ENCODE measurements at regions of chr1 and their contacts with region 1.

Region 1: GRCh38 chr1:203888807-203889251 is 27.4 kb downstream of the SNRPE start:
- DNase-seq: peak; percentile 14 to 87
- H3K4me3 ChIP-seq: no peak overlapping the region; the same call in 1 of the 2 replicates
- H3K27ac ChIP-seq: peak overlapping the region; percentile 89
- H3K4me1 ChIP-seq: peaks cover 34% of the 10 kb centered on the region
- H3K27me3 ChIP-seq: no peaks in the 10 kb centered on the region
- CTCF ChIP-seq: no peak

Region 2: DNA sequence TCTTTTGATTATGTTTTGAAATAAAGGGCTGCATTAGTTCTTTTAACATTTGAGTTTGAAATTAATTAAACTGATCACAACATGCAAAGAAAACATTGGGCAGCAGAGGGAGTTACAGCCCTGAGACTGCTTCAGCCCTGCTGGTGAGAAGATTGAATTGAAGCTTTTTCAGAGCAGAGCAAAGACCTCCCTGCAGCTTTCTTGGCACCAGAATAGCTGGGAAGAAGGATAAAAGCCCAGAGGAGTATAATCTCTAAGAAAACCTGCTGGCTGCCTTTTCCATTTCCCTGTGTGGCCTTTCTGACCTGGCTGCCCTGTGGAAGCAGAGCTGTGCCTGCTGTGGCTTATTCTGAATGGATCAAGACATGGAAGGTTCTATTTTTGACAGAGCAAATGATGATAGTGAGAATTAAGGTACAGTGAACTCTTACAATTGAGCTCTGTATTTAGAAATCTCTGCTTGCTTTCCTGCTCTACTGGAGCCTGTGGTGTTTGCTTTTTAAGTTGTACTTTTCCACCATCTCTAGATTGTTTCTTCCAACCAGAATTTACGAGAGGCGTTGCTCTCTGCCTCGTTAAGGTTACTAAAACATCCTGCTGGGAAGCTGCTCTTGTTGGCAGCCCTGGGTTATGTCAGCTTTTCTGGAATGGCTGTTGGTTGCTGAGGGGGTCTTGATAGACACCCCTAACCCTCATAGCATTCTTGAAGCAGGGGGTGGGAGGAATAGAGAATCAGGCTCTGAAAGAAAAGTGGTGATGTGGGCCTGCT is 17.5 kb before region 1 on chr1:
- CTCF ChIA-PET with region 1: no interaction called
- POLR2A ChIA-PET with region 1: no interaction called
- intact Hi-C with region 1: no loop called
- DNase-seq: peak; percentile 41 to 60
- H3K4me3 ChIP-seq: no peak overlapping the region
- H3K27ac ChIP-seq: peak overlapping the region; percentile 63
- H3K4me1 ChIP-seq: peaks cover 33% of the 10 kb centered on the region
- H3K27me3 ChIP-seq: no peaks in the 10 kb centered on the region
- CTCF ChIP-seq: peak; percentile 92

Region 3: DNA sequence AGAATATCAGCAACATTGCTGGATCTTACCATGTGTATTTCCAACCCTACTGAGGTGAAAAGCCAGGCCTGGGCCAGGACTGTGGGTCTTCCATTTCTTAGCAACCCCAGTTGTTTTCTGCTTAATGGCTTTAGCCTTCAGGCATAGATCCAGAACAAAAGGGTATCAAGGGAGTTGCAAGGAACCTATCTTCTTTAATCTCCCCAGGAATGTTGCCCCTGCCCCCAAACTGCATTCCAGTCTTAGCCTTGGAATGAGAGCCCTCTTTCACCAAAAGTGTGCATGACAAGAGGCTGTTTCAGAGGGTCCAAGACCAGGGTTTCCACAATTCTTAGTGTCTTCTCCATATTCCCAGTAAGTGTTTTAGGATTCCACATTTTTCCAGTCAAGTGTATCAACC is 96.2 kb after region 1 on chr1:
- CTCF ChIA-PET with region 1: interaction called, 5 read pairs
- POLR2A ChIA-PET with region 1: no interaction called
- intact Hi-C with region 1: loop called (anchors 5 kb)
- DNase-seq: peak in 1 of 2 experiments; percentile 51
- H3K4me3 ChIP-seq: no peak overlapping the region
- H3K27ac ChIP-seq: no peak overlapping the region
- H3K4me1 ChIP-seq: peaks cover 6% of the 10 kb centered on the region; the same call in 1 of the 2 replicates
- H3K27me3 ChIP-seq: no peaks in the 10 kb centered on the region
- CTCF ChIP-seq: no peak

Region 4: GRCh38 chr1:204072931-204073836 is 184.4 kb after region 1 on chr1 and contains the start of gene SOX13:
- CTCF ChIA-PET with region 1: interaction called, 20 read pairs
- POLR2A ChIA-PET with region 1: no interaction called
- intact Hi-C with region 1: loop called (anchors 5 kb)
- DNase-seq: peak; percentile 63 to 83
- H3K4me3 ChIP-seq: peak within 1 kb of the TSS; percentile 96
- H3K27ac ChIP-seq: peak within 1 kb of the TSS; percentile 52
- H3K4me1 ChIP-seq: peaks cover 30% of the 10 kb centered on the region
- H3K27me3 ChIP-seq: no peaks in the 10 kb centered on the region
- CTCF ChIP-seq: peak; percentile 48
- total RNA-seq, gene SOX13: 89.9 and 102 TPM in 2 replicates